Activated CD8-positive, alpha-beta T cell treated with anti-CD3 and anti-CD28 coated beads for 36 hours (primary cell): ENCODE measurements at regions of chr3 and their contacts with region 1.

Region 1: GRCh38 chr3:106176734-106177133 is 307.9 kb upstream of the CBLB start:
- DNase-seq: peak; percentile 82
- ATAC-seq: peak; percentile 88
- H3K4me3 Mint-ChIP-seq: peak overlapping the region; percentile 38
- H3K27ac Mint-ChIP-seq: peak overlapping the region; percentile 88
- H3K4me1 Mint-ChIP-seq: peaks cover 76% of the 10 kb centered on the region
- H3K27me3 Mint-ChIP-seq: no peaks in the 10 kb centered on the region
- CTCF ChIP-seq: no peak

Region 2: DNA sequence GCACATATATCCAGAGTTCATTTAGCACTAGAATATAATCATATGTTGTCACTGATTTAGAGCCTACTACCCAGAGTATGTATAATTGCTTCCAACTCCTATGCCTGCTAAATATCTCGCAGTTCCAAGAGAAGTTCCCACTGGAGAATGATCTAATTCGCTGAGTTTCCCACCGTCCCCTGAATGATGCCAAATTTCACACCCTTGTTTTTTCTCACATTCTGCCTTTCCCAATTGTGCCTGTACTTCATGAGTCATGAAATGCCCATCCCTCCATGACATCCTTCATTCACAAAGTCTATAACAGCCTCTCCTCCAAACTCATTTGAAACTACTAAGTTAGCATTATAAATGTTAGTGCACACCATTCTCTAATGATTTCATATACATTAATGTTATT is 485.1 kb before region 1 on chr3:
- CTCF ChIA-PET with region 1: no interaction called
- POLR2A ChIA-PET with region 1: no interaction called
- intact Hi-C with region 1: loop called (anchors 10 kb)
- DNase-seq: no peak
- ATAC-seq: no peak
- H3K4me3 Mint-ChIP-seq: no peak overlapping the region
- H3K27ac Mint-ChIP-seq: peak overlapping the region; percentile 8
- H3K4me1 Mint-ChIP-seq: peaks cover 40% of the 10 kb centered on the region
- H3K27me3 Mint-ChIP-seq: no peaks in the 10 kb centered on the region
- CTCF ChIP-seq: no peak

Region 3: GRCh38 chr3:105868742-105869530 is 307.8 kb before region 1 on chr3 and contains the start of gene CBLB:
- CTCF ChIA-PET with region 1: no interaction called
- POLR2A ChIA-PET with region 1: interaction called, 4 read pairs
- intact Hi-C with region 1: loop called (anchors 2 kb)
- DNase-seq: peak; percentile 91
- ATAC-seq: peak; percentile 87
- H3K4me3 Mint-ChIP-seq: no peak within 1 kb of the TSS
- H3K27ac Mint-ChIP-seq: peak within 1 kb of the TSS; percentile 96
- H3K4me1 Mint-ChIP-seq: peaks cover 26% of the 10 kb centered on the region
- H3K27me3 Mint-ChIP-seq: no peaks in the 10 kb centered on the region
- CTCF ChIP-seq: no peak
- total RNA-seq, gene CBLB: 104 to 113 TPM

Region 4: GRCh38 chr3:106013971-106014370 is 162.8 kb before region 1 on chr3:
- CTCF ChIA-PET with region 1: interaction called, 3 read pairs
- POLR2A ChIA-PET with region 1: interaction called, 3 read pairs
- intact Hi-C with region 1: loop called (anchors 10 kb)
- DNase-seq: peak; percentile 25
- ATAC-seq: peak; percentile 40
- H3K4me3 Mint-ChIP-seq: no peak overlapping the region
- H3K27ac Mint-ChIP-seq: peak overlapping the region; percentile 47
- H3K4me1 Mint-ChIP-seq: peaks cover 46% of the 10 kb centered on the region
- H3K27me3 Mint-ChIP-seq: no peaks in the 10 kb centered on the region
- CTCF ChIP-seq: no peak

Region 5: GRCh38 chr3:106215047-106215446 is 38.3 kb after region 1 on chr3:
- CTCF ChIA-PET with region 1: no interaction called
- POLR2A ChIA-PET with region 1: no interaction called
- intact Hi-C with region 1: loop called (anchors 5 kb)
- DNase-seq: peak; percentile 78
- ATAC-seq: peak; percentile 95
- H3K4me3 Mint-ChIP-seq: peak overlapping the region; percentile 6
- H3K27ac Mint-ChIP-seq: peak overlapping the region; percentile 85
- H3K4me1 Mint-ChIP-seq: peaks cover 57% of the 10 kb centered on the region
- H3K27me3 Mint-ChIP-seq: no peaks in the 10 kb centered on the region
- CTCF ChIP-seq: no peak

Region 6: GRCh38 chr3:106428565-106428994 is 251.8 kb after region 1 on chr3:
- CTCF ChIA-PET with region 1: no interaction called
- POLR2A ChIA-PET with region 1: no interaction called
- intact Hi-C with region 1: loop called (anchors 10 kb)
- DNase-seq: peak; percentile 64
- ATAC-seq: peak; percentile 79
- H3K4me3 Mint-ChIP-seq: no peak overlapping the region
- H3K27ac Mint-ChIP-seq: peak overlapping the region; percentile 93
- H3K4me1 Mint-ChIP-seq: peaks cover 50% of the 10 kb centered on the region
- H3K27me3 Mint-ChIP-seq: no peaks in the 10 kb centered on the region
- CTCF ChIP-seq: no peak